K562 (cell line): ENCODE measurements at regions of chr6 and their contacts with region 1.

Region 1: GRCh38 chr6:157021344-157021992 is 244.3 kb downstream of the ARID1B start:
- DNase-seq: peak; percentile 87 to 93 (median 90)
- ATAC-seq: peak; percentile 92
- H3K4me3 ChIP-seq: peak overlapping the region; percentile 74
- H3K27ac ChIP-seq: peak overlapping the region; percentile 98
- H3K4me1 ChIP-seq: peaks cover 19 to 25% of the 10 kb centered on the region in 2 experiments
- H3K27me3 ChIP-seq: no peaks in the 10 kb centered on the region
- CTCF ChIP-seq: peak; percentile 52 to 73 (median 54); a peak in 5 of 6 replicates
- EP300 ChIP-seq: no peak
- POLR2A ChIP-seq: peak; percentile 96
- RAD21 ChIP-seq: peak; percentile 10 to 42

Region 2: DNA sequence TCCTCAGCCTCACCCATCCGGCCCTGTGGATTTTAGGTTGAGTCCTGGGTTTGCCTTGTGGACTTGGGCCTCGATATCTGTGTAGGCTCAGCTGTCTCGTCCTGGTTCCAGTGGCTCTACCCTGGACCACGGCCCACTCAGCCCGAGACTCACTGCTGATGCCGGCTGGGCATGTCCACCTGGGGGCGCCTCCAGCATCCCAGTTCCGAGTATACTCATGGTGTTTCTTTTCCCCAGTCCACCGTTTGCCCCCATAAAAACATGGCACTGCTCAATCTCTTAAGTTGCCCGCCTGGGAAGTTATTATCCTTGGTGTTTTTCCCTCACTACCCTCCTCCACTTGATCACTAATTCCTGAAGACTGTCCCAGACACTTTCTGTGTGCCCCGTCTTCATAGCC is 145.2 kb before region 1 on chr6:
- CTCF ChIA-PET with region 1: no interaction called
- POLR2A ChIA-PET with region 1: no interaction called
- in situ Hi-C with region 1: no loop called
- intact Hi-C with region 1: loop called (anchors 5 kb)
- DNase-seq: peak in 3 of 4 experiments; percentile 28 to 34 (median 33)
- ATAC-seq: peak; percentile 81
- H3K4me3 ChIP-seq: no peak overlapping the region
- H3K27ac ChIP-seq: no peak overlapping the region
- H3K4me1 ChIP-seq: peaks cover 0 to 4% of the 10 kb centered on the region in 2 experiments; a peak in 2 of 5 replicates
- H3K27me3 ChIP-seq: no peaks in the 10 kb centered on the region
- CTCF ChIP-seq: peak; percentile 50 to 68 (median 60); a peak in 5 of 6 replicates
- EP300 ChIP-seq: no peak
- POLR2A ChIP-seq: no peak
- RAD21 ChIP-seq: peak; percentile 29 to 65

Region 3: DNA sequence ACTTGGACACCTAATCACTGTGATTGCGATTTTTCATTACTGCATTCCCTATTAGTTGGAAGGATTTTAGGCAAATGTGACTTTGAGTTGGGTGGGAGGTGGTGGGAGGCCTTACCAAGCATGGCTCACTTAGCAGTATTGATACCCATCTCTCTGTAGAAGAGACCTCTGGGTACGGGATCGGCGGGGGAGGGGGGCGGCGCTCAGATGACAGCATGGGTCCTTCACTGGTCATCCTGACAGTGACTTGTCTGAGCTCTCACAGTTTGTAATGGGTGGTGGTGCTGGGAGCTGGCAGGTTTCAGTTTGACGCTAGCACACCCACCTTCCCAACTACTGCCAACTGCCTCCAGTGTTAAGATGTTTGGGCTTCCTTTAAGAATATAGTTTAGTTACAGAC is 12.9 kb before region 1 on chr6:
- CTCF ChIA-PET with region 1: no interaction called
- POLR2A ChIA-PET with region 1: interaction called, 11 read pairs
- in situ Hi-C with region 1: no loop called
- intact Hi-C with region 1: no loop called
- DNase-seq: no peak
- ATAC-seq: peak; percentile 45
- H3K4me3 ChIP-seq: no peak overlapping the region
- H3K27ac ChIP-seq: no peak overlapping the region
- H3K4me1 ChIP-seq: peaks cover 6% of the 10 kb centered on the region in 2 experiments; a peak in 4 of 5 replicates
- H3K27me3 ChIP-seq: no peaks in the 10 kb centered on the region
- CTCF ChIP-seq: no peak
- EP300 ChIP-seq: no peak
- POLR2A ChIP-seq: no peak
- RAD21 ChIP-seq: no peak

Region 4: GRCh38 chr6:157221007-157221816 is 199.7 kb after region 1 on chr6:
- CTCF ChIA-PET with region 1: no interaction called
- POLR2A ChIA-PET with region 1: no interaction called
- in situ Hi-C with region 1: no loop called
- intact Hi-C with region 1: no loop called
- DNase-seq: peak; percentile 92 to 96 (median 95)
- ATAC-seq: peak; percentile 92
- H3K4me3 ChIP-seq: peak overlapping the region; percentile 31
- H3K27ac ChIP-seq: peak overlapping the region; percentile 54
- H3K4me1 ChIP-seq: peaks cover 13 to 60% of the 10 kb centered on the region in 2 experiments
- H3K27me3 ChIP-seq: no peaks in the 10 kb centered on the region; a peak in 1 of 5 replicates
- CTCF ChIP-seq: peak in 1 of 3 experiments; percentile 19; a peak in 2 of 6 replicates
- EP300 ChIP-seq: no peak
- POLR2A ChIP-seq: peak; percentile 80
- RAD21 ChIP-seq: no peak

Region 5: GRCh38 chr6:158591134-158591809 is 1569.8 kb after region 1 on chr6:
- CTCF ChIA-PET with region 1: no interaction called
- POLR2A ChIA-PET with region 1: no interaction called
- in situ Hi-C with region 1: no loop called
- intact Hi-C with region 1: no loop called
- DNase-seq: no peak
- ATAC-seq: no peak
- H3K4me3 ChIP-seq: no peak overlapping the region
- H3K27ac ChIP-seq: no peak overlapping the region
- H3K4me1 ChIP-seq: no peaks in the 10 kb centered on the region
- H3K27me3 ChIP-seq: no peaks in the 10 kb centered on the region
- CTCF ChIP-seq: no peak
- EP300 ChIP-seq: no peak
- POLR2A ChIP-seq: no peak
- RAD21 ChIP-seq: no peak